ENCODE measurements at regions of chr1 and their contacts with region 1.

Region 1: GRCh38 chr1:160837558-160838205 is 25.0 kb downstream of the CD244 start:
- DNase-seq: peak; percentile 87
- ATAC-seq: peak; percentile 93
- H3K4me3 Mint-ChIP-seq: peak overlapping the region; percentile 42
- H3K27ac Mint-ChIP-seq: peak overlapping the region; percentile 91
- H3K4me1 Mint-ChIP-seq: peaks cover 55% of the 10 kb centered on the region
- H3K27me3 Mint-ChIP-seq: no peaks in the 10 kb centered on the region

Region 2: DNA sequence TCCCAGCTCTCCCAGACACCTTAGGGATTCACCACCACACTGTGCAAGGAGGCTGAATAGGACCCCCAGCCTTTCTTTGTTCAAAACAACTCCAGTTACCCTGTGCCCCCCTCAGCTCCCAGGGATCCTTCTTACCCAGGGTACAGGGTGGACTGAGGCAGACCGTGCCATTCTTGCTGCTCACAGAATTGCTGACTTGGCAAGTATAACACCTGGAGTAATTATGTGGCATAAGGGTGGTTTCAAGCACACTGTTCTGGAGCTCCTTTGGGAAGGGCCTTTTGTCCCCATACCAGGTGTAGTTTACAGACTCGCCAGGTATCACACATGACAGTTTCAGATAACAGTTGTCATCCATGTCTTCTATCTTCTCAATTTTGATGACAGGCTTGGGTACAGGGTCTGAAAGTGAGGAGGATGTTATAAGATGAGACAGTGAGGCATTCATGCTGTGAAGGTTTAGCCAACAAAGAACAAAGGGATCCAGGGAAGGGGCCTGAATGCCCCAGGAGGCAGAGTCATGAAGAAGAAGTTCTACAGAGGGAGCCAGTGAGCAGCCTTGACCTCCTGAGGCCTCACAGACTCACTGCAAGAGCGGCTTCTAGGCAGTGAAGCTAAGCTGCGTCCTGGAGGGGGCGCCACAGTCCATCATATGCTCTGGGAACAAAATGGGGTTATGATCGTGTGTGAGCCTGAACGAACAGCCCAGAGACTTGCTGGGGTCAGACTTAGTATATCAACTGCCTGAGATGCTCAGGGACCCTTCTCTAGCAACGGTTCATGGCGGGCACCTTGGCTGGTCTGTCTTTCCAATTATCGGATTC is 156.4 kb before region 1 on chr1:
- CTCF ChIA-PET with region 1: interaction called, 33 read pairs
- POLR2A ChIA-PET with region 1: no interaction called
- intact Hi-C with region 1: loop called in 1 of 2 experiments (anchors 1 kb)
- DNase-seq: peak; percentile 96
- ATAC-seq: peak; percentile 76
- H3K4me3 Mint-ChIP-seq: no peak overlapping the region
- H3K27ac Mint-ChIP-seq: peak overlapping the region; percentile 94
- H3K4me1 Mint-ChIP-seq: peaks cover 78% of the 10 kb centered on the region
- H3K27me3 Mint-ChIP-seq: no peaks in the 10 kb centered on the region

Region 3: DNA sequence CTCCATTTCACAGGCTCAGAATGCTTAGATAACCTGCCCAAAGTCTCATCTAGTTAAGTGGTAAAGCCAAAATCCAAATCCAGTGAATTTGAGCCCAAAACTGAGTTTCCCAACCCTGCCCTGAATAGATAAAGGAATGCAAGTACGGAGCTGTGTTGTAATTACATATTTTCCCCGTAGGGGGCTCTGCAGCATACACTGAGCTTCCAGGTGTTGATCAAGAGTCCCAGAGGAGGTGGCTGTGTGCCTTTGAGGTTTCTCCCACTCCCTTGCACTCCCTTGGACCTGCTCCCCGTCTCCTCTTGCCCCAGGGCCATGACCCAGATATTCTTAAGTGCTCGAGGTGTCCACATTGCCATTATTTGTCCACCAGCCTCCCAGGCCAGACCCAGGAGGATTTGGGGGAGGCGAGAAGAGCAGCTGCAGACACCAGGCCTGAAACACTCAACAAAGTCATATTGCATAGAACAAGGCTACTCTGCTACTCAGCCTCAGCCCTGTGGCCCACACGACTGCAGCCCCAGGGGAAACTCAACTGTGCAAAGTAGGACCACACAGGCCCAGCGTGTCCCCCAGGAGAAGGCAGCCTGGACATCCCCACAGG is 60.1 kb before region 1 on chr1:
- CTCF ChIA-PET with region 1: interaction called, 130 read pairs
- POLR2A ChIA-PET with region 1: no interaction called
- intact Hi-C with region 1: no loop called
- DNase-seq: peak; percentile 64
- ATAC-seq: peak; percentile 38
- H3K4me3 Mint-ChIP-seq: no peak overlapping the region
- H3K27ac Mint-ChIP-seq: peak overlapping the region; percentile 5
- H3K4me1 Mint-ChIP-seq: peaks cover 50% of the 10 kb centered on the region
- H3K27me3 Mint-ChIP-seq: no peaks in the 10 kb centered on the region

Region 4: GRCh38 chr1:160862203-160863060 is 24.8 kb after region 1 on chr1 and contains the start of gene CD244:
- CTCF ChIA-PET with region 1: interaction called, 11 read pairs
- POLR2A ChIA-PET with region 1: interaction called, 3 read pairs
- intact Hi-C with region 1: loop called in 1 of 2 experiments (anchors 2 kb)
- DNase-seq: peak; percentile 79
- ATAC-seq: peak; percentile 98
- H3K4me3 Mint-ChIP-seq: no peak within 1 kb of the TSS
- H3K27ac Mint-ChIP-seq: no peak within 1 kb of the TSS
- H3K4me1 Mint-ChIP-seq: peaks cover 19% of the 10 kb centered on the region
- H3K27me3 Mint-ChIP-seq: no peaks in the 10 kb centered on the region
- total RNA-seq, gene CD244: 0.14 to 0.25 TPM

Region 5: DNA sequence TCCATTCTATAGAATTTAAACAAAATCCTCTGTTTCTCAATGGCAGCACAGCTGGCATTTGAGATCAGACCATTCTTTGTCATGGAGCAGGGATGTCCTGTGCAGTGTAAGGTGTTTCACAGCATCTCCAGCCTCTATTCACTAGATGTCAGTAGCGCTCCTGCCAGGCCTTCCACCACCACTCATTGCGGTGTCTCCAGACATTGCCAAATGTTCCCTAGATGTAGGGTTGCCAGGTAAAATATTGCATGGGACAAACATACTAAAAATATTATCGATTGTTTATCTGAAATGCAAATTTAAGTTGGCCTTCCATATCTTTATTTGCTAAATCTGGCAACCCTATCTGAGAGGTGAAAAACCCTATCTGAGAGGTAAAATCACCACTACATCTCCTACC is 105.2 kb after region 1 on chr1:
- CTCF ChIA-PET with region 1: interaction called, 11 read pairs
- POLR2A ChIA-PET with region 1: no interaction called
- intact Hi-C with region 1: no loop called
- DNase-seq: no peak
- ATAC-seq: no peak
- H3K4me3 Mint-ChIP-seq: no peak overlapping the region
- H3K27ac Mint-ChIP-seq: no peak overlapping the region
- H3K4me1 Mint-ChIP-seq: no peaks in the 10 kb centered on the region
- H3K27me3 Mint-ChIP-seq: peaks cover 2% of the 10 kb centered on the region